ENCODE measurements at regions of chr14 and their contacts with region 1.

Region 1: GRCh38 chr14:70045844-70046535 is 142.8 kb downstream of the SLC8A3 start:
- DNase-seq: peak; percentile 48
- ATAC-seq: peak; percentile 99
- H3K4me3 ChIP-seq: no peak overlapping the region
- H3K27ac ChIP-seq: no peak overlapping the region
- H3K4me1 ChIP-seq: no peaks in the 10 kb centered on the region
- H3K27me3 ChIP-seq: peaks cover 5% of the 10 kb centered on the region
- CTCF ChIP-seq: peak; percentile 62
- POLR2A ChIP-seq: no peak
- RAD21 ChIP-seq: peak; percentile 77

Region 2: GRCh38 chr14:70073924-70074566 is 28.1 kb after region 1 on chr14:
- CTCF ChIA-PET with region 1: no interaction called
- POLR2A ChIA-PET with region 1: no interaction called
- dilution Hi-C with region 1: no loop called
- in situ Hi-C with region 1: no loop called
- intact Hi-C with region 1: loop called (anchors 1 kb)
- DNase-seq: peak; percentile 73
- ATAC-seq: peak; percentile 95
- H3K4me3 ChIP-seq: no peak overlapping the region
- H3K27ac ChIP-seq: no peak overlapping the region
- H3K4me1 ChIP-seq: no peaks in the 10 kb centered on the region
- H3K27me3 ChIP-seq: peaks cover 19% of the 10 kb centered on the region
- CTCF ChIP-seq: peak; percentile 79
- POLR2A ChIP-seq: no peak
- RAD21 ChIP-seq: peak; percentile 76

Region 3: DNA sequence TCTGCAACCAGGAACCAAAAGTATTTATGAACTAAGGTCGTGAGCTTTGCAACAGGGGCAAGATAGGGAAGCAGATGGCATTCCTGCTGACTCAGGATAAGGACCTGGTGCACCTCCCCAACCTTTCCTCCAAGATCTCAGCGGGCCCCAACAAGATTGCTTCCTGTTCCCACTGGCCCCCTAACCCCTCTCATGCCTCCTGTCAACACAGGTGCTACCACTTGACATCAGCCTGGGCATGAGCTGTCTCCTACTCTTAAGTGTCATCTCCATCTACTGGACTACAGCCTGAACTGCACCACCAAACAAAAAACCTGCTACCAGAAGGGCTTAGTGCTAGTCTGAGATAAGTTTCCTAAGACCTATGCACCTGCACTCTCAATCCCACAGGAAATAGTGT is 521.8 kb after region 1 on chr14:
- CTCF ChIA-PET with region 1: no interaction called
- POLR2A ChIA-PET with region 1: no interaction called
- dilution Hi-C with region 1: no loop called
- in situ Hi-C with region 1: no loop called
- intact Hi-C with region 1: loop called (anchors 5 kb)
- DNase-seq: peak; percentile 39
- ATAC-seq: peak; percentile 93
- H3K4me3 ChIP-seq: no peak overlapping the region
- H3K27ac ChIP-seq: no peak overlapping the region
- H3K4me1 ChIP-seq: no peaks in the 10 kb centered on the region
- H3K27me3 ChIP-seq: no peaks in the 10 kb centered on the region
- CTCF ChIP-seq: peak; percentile 52
- POLR2A ChIP-seq: no peak
- RAD21 ChIP-seq: peak; percentile 59

Region 4: GRCh38 chr14:70809543-70810244 is 763.7 kb after region 1 on chr14:
- CTCF ChIA-PET with region 1: no interaction called
- POLR2A ChIA-PET with region 1: no interaction called
- dilution Hi-C with region 1: no loop called
- in situ Hi-C with region 1: no loop called
- intact Hi-C with region 1: loop called (anchors 2 kb)
- DNase-seq: peak; percentile 26
- ATAC-seq: peak; percentile 93
- H3K4me3 ChIP-seq: peak overlapping the region; percentile 47
- H3K27ac ChIP-seq: no peak overlapping the region
- H3K4me1 ChIP-seq: no peaks in the 10 kb centered on the region
- H3K27me3 ChIP-seq: peaks cover 32% of the 10 kb centered on the region
- CTCF ChIP-seq: no peak
- POLR2A ChIP-seq: no peak
- RAD21 ChIP-seq: no peak

Measured in IMR-90 (cell line).